ENCODE measurements at regions of chr11 and their contacts with region 1.

Region 1: GRCh38 chr11:34357701-34358257 is at the start of gene ABTB2:
- DNase-seq: peak; percentile 99
- H3K4me3 Mint-ChIP-seq: peak within 1 kb of the TSS; percentile 76
- H3K27ac Mint-ChIP-seq: peak within 1 kb of the TSS; percentile 69
- H3K4me1 Mint-ChIP-seq: peaks cover 16% of the 10 kb centered on the region
- H3K27me3 Mint-ChIP-seq: peaks cover 27% of the 10 kb centered on the region
- total RNA-seq, gene ABTB2: 3.1 to 3.7 TPM

Region 2: GRCh38 chr11:33893711-33894397 is 463.9 kb before region 1 on chr11:
- CTCF ChIA-PET with region 1: no interaction called
- intact Hi-C with region 1: loop called (anchors 10 kb)
- DNase-seq: peak; percentile 87
- H3K4me3 Mint-ChIP-seq: peak overlapping the region; percentile 57
- H3K27ac Mint-ChIP-seq: peak overlapping the region; percentile 33
- H3K4me1 Mint-ChIP-seq: peaks cover 47% of the 10 kb centered on the region
- H3K27me3 Mint-ChIP-seq: peaks cover 47% of the 10 kb centered on the region

Region 3: GRCh38 chr11:34105079-34105956 is 252.5 kb before region 1 on chr11 and contains the start of gene NAT10:
- CTCF ChIA-PET with region 1: no interaction called
- intact Hi-C with region 1: loop called (anchors 1 kb)
- DNase-seq: peak; percentile 98
- H3K4me3 Mint-ChIP-seq: peak within 1 kb of the TSS; percentile 94
- H3K27ac Mint-ChIP-seq: peak within 1 kb of the TSS; percentile 94
- H3K4me1 Mint-ChIP-seq: peaks cover 51% of the 10 kb centered on the region
- H3K27me3 Mint-ChIP-seq: no peaks in the 10 kb centered on the region
- total RNA-seq, gene NAT10: 91.0 to 93.3 TPM

Region 4: GRCh38 chr11:34214961-34215805 is 142.6 kb before region 1 on chr11:
- CTCF ChIA-PET with region 1: interaction called, 3 read pairs
- intact Hi-C with region 1: loop called (anchors 1 kb)
- DNase-seq: peak; percentile 96
- H3K4me3 Mint-ChIP-seq: peak overlapping the region; percentile 28
- H3K27ac Mint-ChIP-seq: peak overlapping the region; percentile 83
- H3K4me1 Mint-ChIP-seq: peaks cover 29% of the 10 kb centered on the region
- H3K27me3 Mint-ChIP-seq: no peaks in the 10 kb centered on the region

Region 5: DNA sequence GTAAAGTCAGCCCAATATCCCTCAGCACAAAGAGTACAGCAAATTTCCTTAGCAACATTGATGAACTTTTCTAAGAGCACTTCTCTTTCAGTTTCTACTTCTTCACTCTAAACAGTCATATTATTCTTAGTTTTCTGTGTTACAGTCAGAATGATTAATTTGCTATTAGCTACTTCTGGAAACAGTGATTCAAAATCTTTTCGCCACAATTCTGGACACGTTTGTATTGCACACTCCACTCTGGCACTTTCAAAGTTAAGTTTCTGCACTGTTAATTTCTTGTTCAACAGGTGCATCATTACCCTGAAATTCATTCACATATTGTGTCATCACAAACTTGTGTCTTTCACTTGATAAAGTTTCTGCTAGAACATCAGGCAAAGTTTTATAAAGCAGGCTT is 22.4 kb before region 1 on chr11:
- CTCF ChIA-PET with region 1: interaction called, 5 read pairs
- intact Hi-C with region 1: loop called (anchors 1 kb)
- DNase-seq: peak; percentile 16
- H3K4me3 Mint-ChIP-seq: no peak overlapping the region
- H3K27ac Mint-ChIP-seq: no peak overlapping the region
- H3K4me1 Mint-ChIP-seq: peaks cover 33% of the 10 kb centered on the region
- H3K27me3 Mint-ChIP-seq: peaks cover 12% of the 10 kb centered on the region